Left colon (tissue), 2 donors: ENCODE measurements at regions of chr17 and their contacts with region 1.

Region 1: GRCh38 chr17:63406689-63407330 is 39.3 kb downstream of the CYB561 start:
- DNase-seq: peak; percentile 58 to 77
- ATAC-seq: peak; percentile 95

Region 2: GRCh38 chr17:62703775-62704378 is 702.9 kb before region 1 on chr17:
- intact Hi-C with region 1: loop called in 1 of 2 experiments (anchors 10 kb)
- DNase-seq: peak; percentile 48 to 81
- ATAC-seq: peak; percentile 93

Region 3: GRCh38 chr17:62995377-62995885 is 411.4 kb before region 1 on chr17:
- intact Hi-C with region 1: loop called in 1 of 2 experiments (anchors 10 kb)
- DNase-seq: peak in 1 of 2 donors; percentile 39
- ATAC-seq: peak; percentile 67

Region 4: GRCh38 chr17:63082273-63082993 is 324.4 kb before region 1 on chr17:
- intact Hi-C with region 1: loop called in 1 of 2 experiments (anchors 5 kb)
- DNase-seq: no peak
- ATAC-seq: no peak

Region 5: DNA sequence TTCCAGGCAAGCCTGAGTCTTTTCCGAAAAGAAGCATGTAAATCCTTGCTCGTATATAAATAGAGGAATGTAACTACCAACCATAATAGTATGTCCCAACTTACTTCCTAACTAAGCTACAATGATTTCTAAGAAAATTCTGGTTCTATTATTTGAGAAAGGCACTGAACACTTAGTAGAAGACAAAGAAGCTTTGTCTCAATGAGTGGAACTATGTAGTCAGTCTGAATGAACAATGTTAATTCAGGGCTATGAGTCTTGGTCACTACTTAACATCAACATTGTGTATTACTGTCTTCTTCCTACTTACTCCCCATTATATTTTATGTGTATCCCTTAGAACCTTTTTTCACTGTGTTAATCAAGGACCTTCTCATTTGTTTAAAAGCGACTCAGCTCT is 166.7 kb before region 1 on chr17:
- intact Hi-C with region 1: no loop called
- DNase-seq: no peak
- ATAC-seq: no peak

Region 6: GRCh38 chr17:63275318-63275970 is 131.4 kb before region 1 on chr17:
- intact Hi-C with region 1: no loop called
- DNase-seq: no peak
- ATAC-seq: peak; percentile 64